Activated T-helper 1 cell treated with anti-CD3 and anti-CD28 coated beads, Interleukin-12 subunit alpha, Interleukin-12 subunit beta, Interleukin-2, Interleukin-4 antibody, amounts not matched to agents 30 ng/mL and 10 ng/mL and 1 ng/mL, durations not matched to agents 14 hours and 24 hours and 36 hours (primary cell): ENCODE measurements at regions of chr7 and their contacts with region 1.

Region 1: DNA sequence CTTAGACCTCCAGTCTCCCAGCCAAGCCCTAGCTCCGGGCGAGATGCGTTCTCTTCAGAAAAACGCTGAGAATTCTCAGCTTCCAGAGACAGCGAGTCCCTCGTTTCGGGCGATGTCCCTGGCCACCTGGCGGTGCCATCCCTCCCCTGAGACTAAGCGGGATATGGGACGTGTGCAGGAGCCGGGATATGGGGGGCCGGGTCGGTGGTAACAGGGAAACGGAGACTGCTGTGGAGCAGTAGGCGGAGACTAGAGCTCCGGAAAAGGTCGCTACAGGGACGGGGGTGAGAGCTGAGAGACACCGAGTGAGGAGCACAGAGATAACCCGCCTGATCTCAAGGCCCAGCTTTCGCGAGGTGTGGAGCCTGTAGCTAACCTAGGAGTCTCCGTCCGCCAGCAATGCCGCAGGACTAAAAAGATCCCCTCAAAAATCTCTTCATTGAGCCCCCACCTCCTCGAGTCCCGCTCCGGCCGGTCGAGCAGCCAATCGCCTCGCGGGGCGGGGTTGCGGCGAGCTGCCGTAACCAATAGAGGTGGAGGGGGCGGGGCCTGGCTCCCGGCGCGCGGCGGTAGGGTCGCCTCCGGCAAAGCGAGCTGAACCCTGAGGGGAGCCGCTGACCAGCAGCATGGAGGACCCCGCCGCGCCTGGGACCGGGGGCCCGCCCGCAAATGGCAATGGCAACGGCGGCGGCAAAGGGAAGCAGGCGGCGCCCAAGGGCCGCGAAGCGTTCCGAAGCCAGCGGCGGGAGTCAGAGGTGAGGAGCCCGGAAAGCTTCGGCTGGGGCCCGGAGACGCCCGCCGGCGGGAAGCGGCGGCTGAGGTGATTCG is at the start of gene STRIP2:
- DNase-seq: peak; percentile 94
- H3K4me3 Mint-ChIP-seq: peak within 1 kb of the TSS; percentile 95
- H3K27ac Mint-ChIP-seq: peak within 1 kb of the TSS; percentile 92
- H3K4me1 Mint-ChIP-seq: peaks cover 35% of the 10 kb centered on the region
- H3K27me3 Mint-ChIP-seq: no peaks in the 10 kb centered on the region
- total RNA-seq, gene STRIP2: 74.0 and 79.4 TPM in 2 replicates

Region 2: GRCh38 chr7:129343099-129343700 is 90.9 kb before region 1 on chr7:
- intact Hi-C with region 1: loop called (anchors 1 kb)
- DNase-seq: no peak
- H3K4me3 Mint-ChIP-seq: no peak overlapping the region
- H3K27ac Mint-ChIP-seq: no peak overlapping the region
- H3K4me1 Mint-ChIP-seq: peaks cover 42% of the 10 kb centered on the region
- H3K27me3 Mint-ChIP-seq: no peaks in the 10 kb centered on the region

Region 3: GRCh38 chr7:129401967-129402860 is 31.8 kb before region 1 on chr7:
- intact Hi-C with region 1: loop called (anchors 1 kb)
- DNase-seq: peak; percentile 2
- H3K4me3 Mint-ChIP-seq: no peak overlapping the region
- H3K27ac Mint-ChIP-seq: peak overlapping the region; percentile 0
- H3K4me1 Mint-ChIP-seq: peaks cover 44% of the 10 kb centered on the region
- H3K27me3 Mint-ChIP-seq: no peaks in the 10 kb centered on the region

Region 4: DNA sequence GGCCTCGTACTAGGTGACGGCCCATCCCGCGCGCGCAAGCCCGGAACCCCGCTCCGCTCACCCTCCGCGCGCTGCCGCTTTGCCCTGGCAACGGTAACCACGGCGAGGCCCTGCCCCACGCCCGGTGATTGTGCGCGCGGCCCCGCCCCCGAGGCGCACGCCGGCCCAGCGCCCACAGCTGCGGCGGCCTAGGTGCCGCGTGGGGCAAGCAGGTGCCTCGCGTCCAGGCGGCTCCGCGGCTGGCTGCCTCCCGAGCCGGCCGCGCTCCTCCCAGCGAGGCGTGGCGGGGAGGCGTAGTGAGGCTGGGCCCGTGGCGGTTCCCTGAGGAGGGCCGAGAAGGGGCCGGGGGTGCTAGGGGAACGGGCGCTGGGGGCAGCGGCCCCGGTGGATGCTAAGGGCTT is 68.3 kb after region 1 on chr7 and contains the start of gene SMKR1:
- intact Hi-C with region 1: loop called (anchors 2 kb)
- DNase-seq: peak; percentile 90
- H3K4me3 Mint-ChIP-seq: peak within 1 kb of the TSS; percentile 82
- H3K27ac Mint-ChIP-seq: peak within 1 kb of the TSS; percentile 86
- H3K4me1 Mint-ChIP-seq: peaks cover 19% of the 10 kb centered on the region
- H3K27me3 Mint-ChIP-seq: peaks cover 16% of the 10 kb centered on the region
- total RNA-seq, gene SMKR1: 4.8 and 5.7 TPM in 2 replicates

Region 5: GRCh38 chr7:129825496-129826267 is 391.6 kb after region 1 on chr7:
- intact Hi-C with region 1: loop called (anchors 1 kb)
- DNase-seq: peak; percentile 83
- H3K4me3 Mint-ChIP-seq: peak overlapping the region; percentile 89
- H3K27ac Mint-ChIP-seq: peak overlapping the region; percentile 67
- H3K4me1 Mint-ChIP-seq: peaks cover 14% of the 10 kb centered on the region
- H3K27me3 Mint-ChIP-seq: no peaks in the 10 kb centered on the region